ENCODE measurements at regions of chr22 and their contacts with region 1.

Region 1: DNA sequence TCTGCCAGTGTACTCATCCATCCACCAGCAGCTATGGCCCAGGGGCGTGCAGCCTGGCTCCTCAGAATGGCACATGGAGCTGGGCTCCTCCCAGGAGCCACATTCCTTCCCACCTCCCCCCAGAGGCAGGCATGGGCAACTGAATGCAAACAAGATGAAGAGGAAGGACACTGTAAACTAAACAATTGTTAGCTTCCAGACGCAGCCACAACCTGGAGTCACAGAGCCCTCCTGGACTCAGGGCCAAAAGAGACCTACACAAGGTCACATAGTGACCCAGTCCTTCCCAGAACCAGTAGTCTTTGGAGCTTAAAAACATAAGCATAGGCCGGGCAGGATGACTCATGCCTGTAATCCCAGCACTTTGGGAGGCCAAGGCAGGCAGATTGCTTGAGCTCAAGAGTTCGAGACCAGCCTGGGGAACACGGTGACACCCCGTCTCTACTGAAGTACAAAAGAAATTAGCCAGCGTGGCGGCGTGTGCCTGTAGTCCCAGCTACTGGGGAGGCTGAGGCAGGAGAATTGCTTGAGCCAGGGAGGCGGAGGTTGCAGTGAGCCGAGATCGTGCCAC is 30.7 kb upstream of the CLDN5 start:
- DNase-seq: peak; percentile 52

Region 2: GRCh38 chr22:19495562-19496323 is 59.2 kb before region 1 on chr22:
- intact Hi-C with region 1: loop called in 1 of 2 experiments (anchors 10 kb)
- DNase-seq: no peak

Region 3: GRCh38 chr22:19508024-19508776 is 46.7 kb before region 1 on chr22:
- intact Hi-C with region 1: no loop called
- DNase-seq: peak; percentile 47

Region 4: DNA sequence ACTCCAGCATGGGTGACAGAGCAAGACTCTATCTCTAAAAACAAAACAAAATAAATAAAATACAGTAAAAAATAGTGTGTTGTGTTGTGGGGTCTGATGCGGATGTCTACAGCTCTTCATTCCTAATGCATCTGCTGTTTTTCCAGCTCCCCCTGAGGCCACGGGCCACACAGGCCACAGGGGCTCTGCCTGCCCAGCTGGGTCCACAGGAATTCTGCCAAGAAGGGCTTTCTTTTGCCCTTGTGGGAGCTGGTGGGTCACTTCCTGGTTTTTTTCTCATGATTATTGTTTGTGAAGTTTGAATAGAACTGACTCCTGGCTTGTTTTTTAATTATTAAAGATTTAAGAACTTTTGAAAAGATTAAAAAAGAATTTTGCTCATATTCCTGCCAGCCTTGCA is 36.6 kb after region 1 on chr22:
- intact Hi-C with region 1: no loop called
- DNase-seq: no peak

Measured in posterior vena cava (tissue), 2 donors.